BJ (cell line): ENCODE measurements at regions of chr10 and their contacts with region 1.

Region 1: DNA sequence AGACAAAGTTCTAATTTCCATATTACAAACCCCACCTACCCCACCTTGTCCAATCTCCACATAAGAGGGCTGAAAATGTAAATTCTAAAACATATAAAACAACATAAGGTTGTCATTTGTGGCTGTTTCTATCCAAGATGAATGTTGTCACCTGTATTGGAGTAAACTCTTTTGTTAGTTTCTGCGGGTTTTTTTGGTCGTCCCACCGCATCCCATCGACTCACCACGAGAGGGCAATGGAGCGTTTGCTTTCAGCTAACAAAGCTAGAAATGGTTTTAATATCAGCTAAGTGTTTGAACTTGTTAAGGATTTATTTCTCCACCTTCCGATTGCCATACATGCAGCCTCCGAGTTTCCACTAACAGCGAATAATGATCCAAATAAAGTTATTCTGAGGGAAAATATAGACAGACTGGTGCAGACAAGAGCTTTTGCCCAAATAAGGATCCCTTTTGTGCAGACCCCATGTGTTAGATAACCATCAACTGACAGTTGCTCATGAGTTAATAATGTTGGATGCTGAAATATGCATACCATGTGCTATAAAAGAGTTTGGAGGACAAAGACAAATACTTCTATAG is 137.2 kb downstream of the ARID5B start:
- DNase-seq: no peak
- H3K4me3 ChIP-seq: no peak overlapping the region
- H3K27me3 ChIP-seq: no peaks in the 10 kb centered on the region
- CTCF ChIP-seq: peak; percentile 84

Region 2: DNA sequence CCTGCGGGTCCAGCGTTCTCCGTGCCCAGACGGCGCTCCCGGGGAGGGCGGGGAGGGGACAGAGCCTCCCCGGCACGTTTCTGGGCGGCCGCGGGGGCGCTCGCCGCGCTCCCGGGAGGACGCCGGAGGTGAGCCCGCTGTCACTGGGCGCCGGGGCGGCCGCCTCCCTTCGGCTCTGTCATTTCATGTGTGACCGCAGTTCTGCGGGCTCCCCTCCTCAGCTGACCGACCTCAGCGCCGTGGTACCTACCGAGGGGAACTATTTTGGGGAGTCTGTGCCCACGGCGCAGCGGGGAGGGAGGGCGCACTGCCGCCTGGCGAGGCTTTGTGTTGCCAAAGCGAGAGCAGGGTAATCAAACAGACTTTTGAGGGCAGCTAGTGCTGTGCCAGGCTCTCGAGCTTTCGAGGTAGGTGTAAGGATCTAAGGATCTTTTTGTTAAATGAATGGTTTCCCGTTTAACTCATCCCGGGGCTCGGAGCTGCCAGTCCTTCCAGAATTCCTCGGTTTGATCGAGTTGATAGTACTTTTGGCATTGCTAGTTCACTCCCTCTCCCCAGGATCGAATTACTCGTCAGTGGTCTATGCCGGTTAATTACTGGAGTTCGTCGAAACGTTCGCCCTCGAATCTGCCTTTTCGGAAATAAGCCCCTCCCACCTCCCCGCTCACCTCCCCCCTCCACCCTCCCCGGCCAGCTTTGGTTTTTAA is 135.3 kb before region 1 on chr10:
- CTCF ChIA-PET with region 1: interaction called, 10 read pairs
- POLR2A ChIA-PET with region 1: no interaction called
- DNase-seq: no peak
- H3K4me3 ChIP-seq: peak overlapping the region; percentile 57
- H3K27me3 ChIP-seq: no peaks in the 10 kb centered on the region
- CTCF ChIP-seq: 0 out of 2 replicates have a peak, but pooled peaks have one; percentile 11

Region 3: DNA sequence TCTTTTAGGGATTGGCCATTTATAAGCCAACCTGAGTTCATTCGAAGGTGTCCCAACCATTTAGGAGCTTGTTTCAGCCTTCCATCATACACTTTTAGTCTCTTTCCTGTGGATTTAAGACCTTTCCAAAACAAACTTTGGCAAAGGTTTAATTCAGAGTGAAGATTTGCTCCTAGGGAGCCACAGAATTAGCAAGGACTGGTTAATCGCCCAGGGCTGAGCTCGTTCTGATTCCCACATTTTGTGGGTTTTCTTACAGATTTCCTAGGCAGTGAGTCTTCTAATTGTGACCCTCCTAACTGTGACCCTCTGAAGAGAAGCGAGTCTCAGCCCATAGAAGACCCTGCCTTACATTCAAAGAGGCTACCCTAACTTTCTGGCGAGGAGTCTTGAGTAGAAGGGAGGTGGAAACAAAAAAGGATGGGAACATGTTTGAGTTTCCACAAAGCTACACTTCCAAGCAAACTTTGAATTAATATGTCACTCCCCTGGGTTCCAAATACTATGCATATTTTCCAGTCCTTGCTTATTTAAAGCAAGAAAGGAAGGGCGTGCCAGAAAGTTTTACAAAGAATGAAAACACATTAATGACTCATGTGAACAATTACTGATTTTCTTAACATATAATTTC is 18.9 kb before region 1 on chr10:
- CTCF ChIA-PET with region 1: interaction called, 10 read pairs
- POLR2A ChIA-PET with region 1: interaction called, 8 read pairs
- DNase-seq: no peak
- H3K4me3 ChIP-seq: no peak overlapping the region
- H3K27me3 ChIP-seq: no peaks in the 10 kb centered on the region
- CTCF ChIP-seq: no peak

Region 4: GRCh38 chr10:62025901-62026879 is 12.5 kb before region 1 on chr10:
- CTCF ChIA-PET with region 1: interaction called, 15 read pairs
- POLR2A ChIA-PET with region 1: no interaction called
- DNase-seq: no peak
- H3K4me3 ChIP-seq: no peak overlapping the region
- H3K27me3 ChIP-seq: no peaks in the 10 kb centered on the region
- CTCF ChIP-seq: no peak

Region 5: DNA sequence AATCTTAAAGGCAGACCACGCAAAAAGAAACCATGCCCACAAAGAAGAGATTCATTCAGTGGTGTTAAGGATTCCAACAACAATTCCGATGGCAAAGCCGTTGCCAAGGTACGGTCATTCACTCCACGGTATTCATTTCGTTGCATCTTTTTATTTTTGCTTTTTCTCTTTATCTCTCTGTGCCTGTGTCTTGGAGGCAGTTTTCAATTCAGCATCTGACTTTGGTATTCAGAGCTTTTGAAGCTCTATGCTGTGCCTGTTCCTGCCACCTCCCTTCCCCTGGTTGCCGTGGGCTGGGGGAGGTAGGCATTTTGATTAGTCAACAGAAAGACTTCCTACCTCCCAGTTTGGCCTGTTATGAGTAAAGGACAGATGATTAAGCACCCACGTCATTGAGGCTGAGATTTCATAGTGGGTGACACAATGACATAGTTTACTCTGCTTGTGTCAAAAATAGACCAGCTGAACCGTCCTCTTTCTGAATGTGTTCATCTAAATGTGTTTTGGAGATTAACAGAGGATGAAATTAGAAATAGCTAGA is 12.3 kb after region 1 on chr10:
- CTCF ChIA-PET with region 1: interaction called, 30 read pairs
- POLR2A ChIA-PET with region 1: interaction called, 3 read pairs
- DNase-seq: peak; percentile 72
- H3K4me3 ChIP-seq: peak overlapping the region; percentile 76
- H3K27me3 ChIP-seq: no peaks in the 10 kb centered on the region
- CTCF ChIP-seq: no peak

Region 6: GRCh38 chr10:62063795-62064472 is 25.2 kb after region 1 on chr10:
- CTCF ChIA-PET with region 1: interaction called, 3 read pairs
- POLR2A ChIA-PET with region 1: interaction called, 18 read pairs
- DNase-seq: no peak
- H3K4me3 ChIP-seq: no peak overlapping the region
- H3K27me3 ChIP-seq: no peaks in the 10 kb centered on the region
- CTCF ChIP-seq: no peak

Region 7: DNA sequence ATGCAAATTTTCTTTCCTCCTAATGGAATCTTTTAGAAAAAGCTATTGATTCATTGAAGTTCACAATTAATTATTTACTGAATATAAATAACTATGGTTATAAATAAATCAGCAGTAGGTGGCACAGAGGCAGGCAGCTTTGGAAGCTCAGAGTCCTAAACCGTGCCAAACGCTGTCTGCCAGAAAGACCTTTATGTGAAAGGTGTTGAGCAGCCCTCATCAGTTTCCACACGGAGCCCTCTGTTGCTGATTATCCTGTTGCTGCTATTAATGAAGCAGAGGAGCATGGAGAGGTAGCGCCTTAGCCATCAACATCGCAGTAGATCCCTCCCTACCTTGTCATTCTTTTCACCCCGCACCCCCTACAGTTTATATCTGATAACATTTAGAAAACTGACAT is 179.0 kb after region 1 on chr10:
- CTCF ChIA-PET with region 1: no interaction called
- POLR2A ChIA-PET with region 1: no interaction called
- DNase-seq: no peak
- H3K4me3 ChIP-seq: no peak overlapping the region
- H3K27me3 ChIP-seq: no peaks in the 10 kb centered on the region
- CTCF ChIP-seq: no peak

Region 8: DNA sequence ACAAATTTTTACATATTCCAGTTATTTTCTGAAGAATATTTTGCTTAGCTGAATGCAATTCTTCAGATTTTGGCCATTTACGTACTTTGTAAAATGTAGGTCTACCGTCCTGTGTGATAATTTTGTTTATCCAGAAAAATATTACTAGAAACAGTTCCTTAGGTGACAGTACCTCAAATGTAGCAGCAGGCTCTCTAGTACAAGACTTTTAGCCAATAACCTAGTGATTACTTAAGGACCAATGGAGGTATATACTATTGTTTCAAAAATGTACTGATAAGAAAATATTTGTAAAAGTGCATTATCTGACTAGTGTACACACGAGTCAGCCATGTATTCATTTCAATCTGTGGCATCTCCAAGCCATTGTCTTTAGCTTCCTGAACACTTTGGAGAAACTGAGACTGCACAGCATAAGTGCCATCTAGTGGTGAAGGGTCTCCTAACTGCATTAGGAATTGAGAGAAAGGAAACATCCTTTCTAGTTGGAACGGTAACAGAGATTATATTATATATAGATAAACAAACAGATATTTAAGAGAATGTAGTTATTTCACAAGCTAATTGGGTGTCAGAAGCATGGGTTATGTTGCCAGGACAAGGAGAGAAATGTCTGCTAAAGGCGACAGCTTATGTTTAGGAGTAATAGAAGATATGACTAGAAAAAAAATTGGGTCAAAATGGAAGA is 206.2 kb after region 1 on chr10:
- CTCF ChIA-PET with region 1: interaction called, 44 read pairs
- POLR2A ChIA-PET with region 1: no interaction called
- DNase-seq: no peak
- H3K4me3 ChIP-seq: no peak overlapping the region; the same call in 1 of the 2 replicates
- H3K27me3 ChIP-seq: no peaks in the 10 kb centered on the region
- CTCF ChIP-seq: peak; percentile 86